ENCODE measurements at regions of chr11 and their contacts with region 1.

Region 1: DNA sequence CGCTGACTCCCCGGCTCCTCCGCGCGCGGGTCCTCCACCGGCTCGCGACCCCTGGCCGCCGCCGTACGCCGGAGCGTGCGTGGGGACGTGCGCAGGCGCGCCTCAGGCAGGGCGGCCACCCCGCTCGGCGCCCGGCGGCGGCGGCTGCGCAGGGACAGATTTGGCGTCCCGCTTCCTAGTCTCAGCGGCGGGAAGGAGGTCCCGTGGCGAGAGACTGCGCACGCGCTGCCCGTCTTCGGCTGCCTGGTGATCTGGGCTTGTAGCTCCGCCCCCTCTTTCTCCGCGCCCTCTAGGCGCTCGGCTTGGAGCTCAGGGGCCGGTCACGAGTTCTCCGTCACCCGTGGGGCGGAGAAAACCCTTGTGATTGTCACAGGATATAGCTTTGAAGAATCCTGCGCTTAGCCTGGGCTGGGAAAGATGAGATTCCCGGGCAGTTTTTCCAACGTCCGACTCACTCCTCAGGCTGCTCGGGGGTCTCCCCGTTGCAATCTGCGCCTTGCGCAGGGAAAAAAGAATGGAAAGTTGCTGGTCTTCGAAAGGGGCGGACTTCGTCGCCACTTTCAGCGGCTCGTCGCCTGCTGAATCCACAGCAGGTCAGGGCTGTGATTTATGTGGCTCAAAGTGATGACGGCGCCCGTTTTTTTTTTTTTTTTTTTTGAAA is at the start of gene PATL1:
- DNase-seq: peak; percentile 98 to 100 (median 98)

Region 2: GRCh38 chr11:59550368-59550841 is 118.7 kb before region 1 on chr11:
- intact Hi-C with region 1: loop called (anchors 5 kb)
- DNase-seq: peak; percentile 60 to 97 (median 74)

Region 3: DNA sequence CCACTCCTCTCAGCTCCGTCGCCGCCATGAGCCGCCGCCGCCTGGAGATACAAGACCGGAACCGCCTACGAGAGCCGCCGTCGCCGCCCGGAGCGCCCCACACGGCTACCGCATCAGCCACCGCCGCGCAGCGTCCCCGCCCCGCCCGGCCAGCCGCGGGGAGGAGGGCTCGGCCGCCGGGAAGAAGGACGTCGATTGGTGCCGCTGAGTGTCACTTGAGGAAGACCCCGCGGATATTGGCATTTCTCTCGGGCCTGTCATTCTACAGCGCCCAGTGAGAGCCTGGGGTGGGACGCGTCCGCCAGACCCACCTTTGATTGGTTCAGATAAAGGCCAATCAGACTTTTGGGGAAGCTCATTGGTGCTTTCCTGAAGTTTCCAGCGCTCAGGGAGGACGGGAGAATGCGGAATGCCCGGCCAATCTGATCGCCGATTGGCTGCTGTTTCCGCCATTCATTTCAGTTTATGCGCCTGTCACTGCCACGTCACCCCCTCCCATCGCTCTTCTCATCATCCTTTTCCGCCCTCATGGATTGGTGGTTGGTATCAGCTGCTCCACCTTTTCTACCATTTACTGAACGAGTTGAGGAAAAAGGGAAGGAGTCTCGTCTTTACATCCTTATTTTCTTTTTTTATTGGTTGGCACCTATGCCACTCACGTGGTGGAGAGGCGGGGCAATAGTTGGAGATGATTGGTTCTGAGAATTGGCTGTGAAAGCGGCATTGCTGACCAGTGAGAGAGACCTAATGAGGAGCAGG is 53.3 kb before region 1 on chr11 and contains the start of gene OSBP:
- intact Hi-C with region 1: loop called (anchors 1 kb)
- DNase-seq: peak; percentile 98 to 100 (median 100)

Region 4: GRCh38 chr11:59753650-59754493 is 84.8 kb after region 1 on chr11:
- intact Hi-C with region 1: loop called (anchors 1 kb)
- DNase-seq: peak; percentile 76 to 98 (median 90)

Region 5: GRCh38 chr11:59802639-59803176 is 133.6 kb after region 1 on chr11:
- intact Hi-C with region 1: loop called (anchors 5 kb)
- DNase-seq: peak in 2 of 10 donors; percentile 14 to 17